OCI-LY7 (cell line): ENCODE measurements at regions of chr19 and their contacts with region 1.

Region 1: DNA sequence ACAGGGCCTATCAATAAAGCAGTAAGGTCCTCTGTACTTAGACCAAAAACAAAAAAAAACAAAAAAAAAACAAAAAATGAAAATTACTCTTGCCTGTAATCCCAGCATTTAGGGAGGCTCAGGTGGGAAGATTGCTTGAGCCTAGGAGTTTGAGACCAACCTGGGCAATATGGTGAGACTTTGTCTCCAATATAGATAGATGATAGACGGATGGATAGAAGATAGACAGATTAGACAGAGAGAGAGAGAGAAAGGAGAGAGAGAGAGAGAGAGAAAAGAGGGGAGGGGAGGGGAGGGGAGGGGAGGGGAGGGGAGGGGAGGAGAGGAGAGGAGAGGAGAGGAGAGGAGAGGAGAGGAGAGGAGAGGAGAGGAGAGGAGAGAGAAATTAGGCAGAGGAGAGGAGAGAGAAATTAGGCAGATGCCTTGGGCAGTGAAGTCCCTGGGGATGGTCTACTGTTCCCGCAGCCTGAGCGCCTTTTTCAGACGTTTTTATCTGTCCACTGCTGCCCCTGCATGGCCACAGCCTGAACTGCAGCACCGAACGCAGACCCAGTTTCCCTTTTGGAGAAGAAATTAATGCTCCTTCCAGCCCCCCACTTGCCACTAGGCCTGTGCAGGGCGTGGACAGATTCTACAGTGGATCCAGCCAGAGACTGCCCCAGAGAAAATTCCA is 9.8 kb upstream of the ZNF627 start:
- DNase-seq: peak; percentile 91
- H3K4me3 ChIP-seq: no peak overlapping the region
- H3K27ac ChIP-seq: peak overlapping the region; percentile 7
- H3K4me1 ChIP-seq: peaks cover 27% of the 10 kb centered on the region
- CTCF ChIP-seq: peak; percentile 88

Region 2: DNA sequence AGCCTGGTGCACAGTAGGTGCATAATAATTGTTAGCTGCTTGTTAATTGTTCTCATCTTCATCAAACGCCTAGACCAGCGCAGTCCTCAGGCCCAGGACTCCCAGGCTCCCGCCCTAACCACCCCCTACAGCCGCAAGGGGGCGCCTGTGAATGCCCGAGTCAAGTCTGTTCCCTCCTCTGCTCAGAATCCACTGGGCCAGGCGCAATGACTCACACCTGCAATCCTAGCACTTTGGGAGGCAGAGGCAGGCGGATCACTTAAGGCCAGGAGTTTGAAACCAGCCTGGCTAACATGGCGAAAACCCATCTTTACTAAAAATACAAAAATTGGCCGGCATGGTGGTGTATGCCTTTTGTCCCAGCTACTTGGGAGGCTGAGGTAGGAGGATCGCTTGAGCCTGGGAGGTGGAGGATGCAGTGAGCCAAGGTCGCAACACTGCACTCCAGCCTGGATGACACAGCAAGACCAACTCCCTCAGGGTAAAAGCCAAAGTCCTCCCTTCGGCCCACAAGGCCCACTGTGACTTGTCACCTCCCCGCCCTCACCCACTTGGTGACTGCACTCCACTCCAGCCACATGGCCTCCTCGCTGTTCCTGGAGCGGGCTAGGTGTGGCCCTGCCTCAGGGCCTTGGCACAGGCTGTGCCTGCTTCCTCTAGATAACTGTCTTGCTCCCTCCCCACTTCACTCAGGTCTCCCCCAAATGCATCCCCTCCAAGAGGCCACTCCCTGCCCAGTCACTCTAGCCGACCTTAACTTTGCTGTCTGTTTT is 90.9 kb before region 1 on chr19:
- CTCF ChIA-PET with region 1: no interaction called
- POLR2A ChIA-PET with region 1: no interaction called
- intact Hi-C with region 1: loop called (anchors 1 kb)
- DNase-seq: peak; percentile 77
- H3K4me3 ChIP-seq: no peak overlapping the region
- H3K27ac ChIP-seq: no peak overlapping the region
- H3K4me1 ChIP-seq: no peaks in the 10 kb centered on the region
- CTCF ChIP-seq: peak; percentile 95

Region 3: DNA sequence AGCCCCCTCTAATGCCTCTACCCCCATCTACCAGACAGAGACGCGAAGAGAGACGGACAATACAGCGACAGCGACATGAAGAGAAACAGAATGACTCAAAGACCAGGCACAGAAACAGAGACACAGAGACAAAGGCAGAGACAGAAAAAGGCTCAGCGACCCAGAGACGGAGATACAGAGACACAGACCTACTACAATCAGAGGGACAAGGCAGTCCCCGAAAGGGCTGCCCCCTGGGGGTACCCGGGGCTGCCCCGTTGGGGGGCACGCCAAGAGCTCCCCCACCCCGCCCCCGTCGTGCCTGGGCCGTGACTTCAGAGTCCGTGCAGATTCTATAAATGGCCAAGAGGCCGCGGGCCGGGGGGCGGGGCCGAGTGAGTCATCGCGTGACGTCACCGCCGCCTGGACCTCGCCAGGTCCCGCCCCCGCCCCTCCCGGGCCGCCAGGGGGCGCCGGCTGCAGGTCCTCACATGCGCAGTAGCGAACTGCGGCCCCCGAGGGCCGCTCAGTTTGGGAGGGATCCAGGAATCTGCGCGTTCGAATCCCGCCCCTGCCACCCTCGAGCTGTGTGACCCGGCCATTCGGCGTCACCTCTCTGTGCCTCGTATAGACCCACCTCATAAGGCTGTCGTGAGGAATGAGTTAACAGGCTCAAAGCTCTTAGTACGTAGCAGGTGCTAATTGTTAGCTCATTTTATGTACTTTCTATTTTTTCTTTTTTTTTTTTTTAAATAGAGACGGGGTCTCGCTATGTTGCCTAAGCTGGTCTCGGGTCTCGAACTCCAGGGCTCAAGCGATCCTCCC is 51.4 kb before region 1 on chr19:
- CTCF ChIA-PET with region 1: no interaction called
- POLR2A ChIA-PET with region 1: no interaction called
- intact Hi-C with region 1: loop called (anchors 2 kb)
- DNase-seq: peak; percentile 93
- H3K4me3 ChIP-seq: peak overlapping the region; percentile 44
- H3K27ac ChIP-seq: no peak overlapping the region
- H3K4me1 ChIP-seq: peaks cover 14% of the 10 kb centered on the region
- CTCF ChIP-seq: peak; percentile 91

Region 4: DNA sequence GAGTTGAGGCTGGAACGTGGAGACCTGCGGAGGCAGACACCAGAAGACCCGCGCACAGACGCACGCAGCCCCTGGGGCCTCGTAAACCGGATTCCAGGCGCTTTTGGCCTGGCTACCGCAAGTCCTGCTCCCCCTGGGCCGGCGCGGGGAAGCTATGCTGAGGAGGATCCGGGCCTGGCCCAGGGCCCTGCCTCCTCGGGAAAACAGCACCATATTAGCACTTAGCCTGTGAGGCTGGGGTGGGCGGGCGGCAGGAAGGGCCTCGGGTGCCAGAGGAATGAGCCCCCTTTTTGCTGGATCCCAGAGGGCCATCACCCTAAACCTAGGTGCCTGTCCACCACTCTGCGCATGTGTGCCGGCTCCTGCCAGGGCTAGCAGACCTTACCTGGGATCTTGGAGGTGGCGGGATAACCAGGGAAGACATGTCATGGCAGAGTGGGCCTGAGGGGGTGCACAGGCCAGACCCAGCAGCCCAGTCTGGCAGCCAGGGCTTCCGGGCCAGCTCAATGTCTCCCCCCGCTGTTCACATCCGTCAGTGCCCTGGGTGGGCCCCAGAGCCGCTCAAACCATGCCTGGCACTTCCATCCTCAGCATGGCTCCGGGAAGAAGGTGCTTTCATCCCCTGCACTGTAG is 35.7 kb before region 1 on chr19:
- CTCF ChIA-PET with region 1: no interaction called
- POLR2A ChIA-PET with region 1: no interaction called
- intact Hi-C with region 1: loop called (anchors 5 kb)
- DNase-seq: peak; percentile 53
- H3K4me3 ChIP-seq: no peak overlapping the region
- H3K27ac ChIP-seq: peak overlapping the region; percentile 67
- H3K4me1 ChIP-seq: peaks cover 33% of the 10 kb centered on the region
- CTCF ChIP-seq: peak; percentile 74

Region 5: GRCh38 chr19:11558881-11559828 is 28.3 kb before region 1 on chr19 and contains the start of gene ELOF1:
- CTCF ChIA-PET with region 1: interaction called, 3 read pairs
- POLR2A ChIA-PET with region 1: no interaction called
- intact Hi-C with region 1: loop called (anchors 1 kb)
- DNase-seq: peak; percentile 99
- H3K4me3 ChIP-seq: peak within 1 kb of the TSS; percentile 96
- H3K27ac ChIP-seq: peak within 1 kb of the TSS; percentile 73
- H3K4me1 ChIP-seq: peaks cover 56% of the 10 kb centered on the region
- CTCF ChIP-seq: peak; percentile 55
- total RNA-seq, gene ELOF1: 48.9 and 60.5 TPM in 2 replicates